ENCODE measurements at regions of chr16 and their contacts with region 1.

Region 1: GRCh38 chr16:56988948-56989945 is at the start of gene NLRC5:
- DNase-seq: peak; percentile 94
- H3K4me3 Mint-ChIP-seq: peak within 1 kb of the TSS; percentile 96
- H3K27ac Mint-ChIP-seq: peak within 1 kb of the TSS; percentile 99
- H3K4me1 Mint-ChIP-seq: peaks cover 66% of the 10 kb centered on the region
- H3K27me3 Mint-ChIP-seq: no peaks in the 10 kb centered on the region
- total RNA-seq, gene NLRC5: 151 to 167 TPM

Region 2: DNA sequence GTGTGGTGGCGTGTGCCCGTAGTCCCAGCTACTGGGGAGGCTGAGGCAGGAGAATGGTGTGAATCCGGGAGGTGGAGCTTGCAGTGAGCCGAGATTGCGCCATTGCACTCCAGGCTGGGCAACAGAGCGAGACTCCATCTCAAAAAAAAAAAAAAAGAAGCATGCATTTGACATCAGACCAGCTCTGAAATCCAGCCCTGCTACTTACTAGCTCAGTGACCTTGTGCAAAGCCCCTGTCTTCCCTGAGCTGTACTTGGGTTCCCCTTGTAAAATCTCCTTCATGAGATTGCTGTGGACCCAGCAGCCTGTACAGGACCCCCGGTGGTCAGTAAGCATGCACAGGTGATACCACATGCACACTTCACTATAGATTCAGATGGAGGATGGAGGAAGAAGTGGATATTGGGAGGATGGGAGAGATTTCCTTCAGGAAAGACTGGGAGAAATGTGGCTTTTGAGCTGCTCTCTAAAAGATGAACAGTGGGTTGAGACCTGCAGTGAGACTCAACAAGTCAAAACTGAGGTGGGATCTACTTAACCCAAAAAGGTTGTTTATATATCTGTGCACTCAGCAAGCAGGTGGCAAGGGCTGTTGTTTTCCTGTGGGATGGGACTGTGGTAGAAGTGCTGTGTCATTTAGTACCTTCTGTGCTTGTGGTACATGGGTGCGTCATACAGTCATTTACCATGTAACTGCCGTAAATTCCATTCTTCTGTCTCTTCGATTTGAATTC is 50.7 kb before region 1 on chr16:
- CTCF ChIA-PET with region 1: no interaction called
- POLR2A ChIA-PET with region 1: interaction called, 18 read pairs
- intact Hi-C with region 1: loop called (anchors 2 kb)
- DNase-seq: peak; percentile 83
- H3K4me3 Mint-ChIP-seq: peak overlapping the region; percentile 77
- H3K27ac Mint-ChIP-seq: peak overlapping the region; percentile 94
- H3K4me1 Mint-ChIP-seq: peaks cover 83% of the 10 kb centered on the region
- H3K27me3 Mint-ChIP-seq: no peaks in the 10 kb centered on the region

Region 3: GRCh38 chr16:57000271-57001025 is 11.2 kb after region 1 on chr16:
- CTCF ChIA-PET with region 1: interaction called, 7 read pairs
- POLR2A ChIA-PET with region 1: interaction called, 29 read pairs
- intact Hi-C with region 1: loop called (anchors 1 kb)
- DNase-seq: peak; percentile 86
- H3K4me3 Mint-ChIP-seq: peak overlapping the region; percentile 64
- H3K27ac Mint-ChIP-seq: peak overlapping the region; percentile 99
- H3K4me1 Mint-ChIP-seq: peaks cover 95% of the 10 kb centered on the region
- H3K27me3 Mint-ChIP-seq: no peaks in the 10 kb centered on the region

Region 4: GRCh38 chr16:57045694-57046381 is 56.6 kb after region 1 on chr16:
- CTCF ChIA-PET with region 1: interaction called, 18 read pairs
- POLR2A ChIA-PET with region 1: interaction called, 50 read pairs
- intact Hi-C with region 1: loop called (anchors 1 kb)
- DNase-seq: peak; percentile 43
- H3K4me3 Mint-ChIP-seq: no peak overlapping the region
- H3K27ac Mint-ChIP-seq: peak overlapping the region; percentile 64
- H3K4me1 Mint-ChIP-seq: peaks cover 57% of the 10 kb centered on the region
- H3K27me3 Mint-ChIP-seq: no peaks in the 10 kb centered on the region